Tibial artery (tissue), 4 donors: ENCODE measurements at regions of chr3 and their contacts with region 1.

Region 1: DNA sequence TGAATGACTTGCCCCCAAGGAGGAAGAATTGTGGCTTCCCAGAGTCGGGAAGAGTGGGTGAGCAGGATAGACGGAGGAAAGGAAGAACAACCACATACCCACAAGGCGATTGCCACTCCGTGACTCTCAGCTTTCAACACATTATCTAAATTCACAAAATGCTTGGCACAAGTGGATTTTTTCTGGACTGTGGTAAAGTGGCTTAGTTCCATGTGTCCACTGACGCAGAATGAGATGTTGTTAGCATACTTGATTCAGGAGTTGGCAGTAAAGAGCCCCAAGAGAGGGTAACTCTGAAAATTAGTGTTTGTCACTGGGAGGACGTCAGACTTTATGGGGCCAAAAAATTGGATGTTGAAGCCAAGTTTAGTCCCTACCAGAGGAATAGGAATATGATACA is 198.8 kb upstream of the CTNNB1 start:
- DNase-seq: peak; percentile 61 to 80
- H3K4me3 ChIP-seq: no peak overlapping the region
- H3K27ac ChIP-seq: peak overlapping the region; percentile 65 to 69
- H3K4me1 ChIP-seq: peaks cover 4 to 69% (median 42%) of the 10 kb centered on the region in 4 donors
- H3K27me3 ChIP-seq: no peaks in the 10 kb centered on the region
- CTCF ChIP-seq: no peak

Region 2: GRCh38 chr3:40877631-40878463 is 122.6 kb before region 1 on chr3:
- intact Hi-C with region 1: loop called (anchors 5 kb)
- DNase-seq: peak; percentile 74 to 93
- H3K4me3 ChIP-seq: peak overlapping the region; percentile 20 to 40
- H3K27ac ChIP-seq: peak overlapping the region; percentile 65 to 68
- H3K4me1 ChIP-seq: peaks cover 0 to 64% (median 37%) of the 10 kb centered on the region in 4 donors
- H3K27me3 ChIP-seq: no peaks in the 10 kb centered on the region
- CTCF ChIP-seq: no peak

Region 3: DNA sequence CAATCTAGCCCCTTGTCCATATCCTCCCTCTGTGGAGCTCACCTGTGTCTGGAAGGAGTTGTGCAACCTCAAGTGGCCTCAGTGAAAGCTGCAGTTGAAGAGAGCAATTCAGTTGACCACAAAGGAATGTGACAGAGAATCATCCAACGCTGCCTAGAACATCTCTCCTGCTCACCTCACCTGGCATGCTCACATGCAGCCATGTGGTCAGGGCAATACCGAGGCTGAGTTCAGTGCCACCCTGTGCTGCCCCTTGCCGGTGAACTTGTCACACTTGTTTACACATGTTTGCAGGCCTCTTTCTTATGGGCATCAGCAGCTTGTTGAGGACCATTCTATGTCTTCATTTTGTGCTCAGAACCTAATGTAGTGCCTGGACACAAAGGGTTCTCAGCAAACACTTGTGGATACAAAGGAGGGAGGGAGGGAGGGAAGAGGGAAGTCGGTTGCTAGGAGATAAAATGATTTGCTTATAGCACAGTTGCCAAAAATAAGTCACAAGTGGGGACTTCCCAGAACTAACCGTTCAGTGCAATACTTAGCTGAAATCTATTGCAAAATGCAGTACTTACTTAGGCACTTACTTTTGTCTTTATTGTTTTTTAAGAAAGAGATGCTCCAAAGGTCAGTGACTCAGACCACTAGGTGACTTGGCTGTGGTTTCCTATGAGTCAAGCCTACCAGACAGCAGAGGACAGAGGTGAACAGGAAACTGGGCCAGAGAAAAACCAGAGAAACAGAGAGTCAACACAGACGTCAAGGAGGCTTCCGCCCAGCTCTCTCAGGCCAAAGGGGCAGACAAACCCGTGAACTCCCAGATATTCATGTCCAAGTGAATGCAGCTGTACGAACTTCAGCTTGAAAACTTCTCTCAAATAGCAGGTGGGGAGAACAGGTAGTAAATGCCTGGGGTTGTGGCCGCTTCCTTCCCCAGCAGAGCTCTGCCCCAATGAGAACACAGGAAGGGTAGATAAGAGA is 29.0 kb before region 1 on chr3:
- intact Hi-C with region 1: loop called (anchors 2 kb)
- DNase-seq: peak; percentile 89
- H3K4me3 ChIP-seq: no peak overlapping the region
- H3K27ac ChIP-seq: peak overlapping the region; percentile 62 to 64
- H3K4me1 ChIP-seq: peaks cover 0 to 62% (median 44%) of the 10 kb centered on the region in 4 donors
- H3K27me3 ChIP-seq: no peaks in the 10 kb centered on the region
- CTCF ChIP-seq: no peak

Region 4: GRCh38 chr3:41026394-41027177 is 26.1 kb after region 1 on chr3:
- intact Hi-C with region 1: no loop called
- DNase-seq: peak in 1 of 2 donors; percentile 49
- H3K4me3 ChIP-seq: no peak overlapping the region
- H3K27ac ChIP-seq: no peak overlapping the region
- H3K4me1 ChIP-seq: peaks cover 0 to 5% (median 0%) of the 10 kb centered on the region in 4 donors
- H3K27me3 ChIP-seq: no peaks in the 10 kb centered on the region
- CTCF ChIP-seq: no peak

Region 5: GRCh38 chr3:41088882-41089281 is 88.4 kb after region 1 on chr3:
- intact Hi-C with region 1: no loop called
- DNase-seq: no peak
- H3K4me3 ChIP-seq: no peak overlapping the region
- H3K27ac ChIP-seq: no peak overlapping the region
- H3K4me1 ChIP-seq: peaks cover 0 to 9% (median 4%) of the 10 kb centered on the region in 4 donors
- H3K27me3 ChIP-seq: no peaks in the 10 kb centered on the region
- CTCF ChIP-seq: no peak

Region 6: DNA sequence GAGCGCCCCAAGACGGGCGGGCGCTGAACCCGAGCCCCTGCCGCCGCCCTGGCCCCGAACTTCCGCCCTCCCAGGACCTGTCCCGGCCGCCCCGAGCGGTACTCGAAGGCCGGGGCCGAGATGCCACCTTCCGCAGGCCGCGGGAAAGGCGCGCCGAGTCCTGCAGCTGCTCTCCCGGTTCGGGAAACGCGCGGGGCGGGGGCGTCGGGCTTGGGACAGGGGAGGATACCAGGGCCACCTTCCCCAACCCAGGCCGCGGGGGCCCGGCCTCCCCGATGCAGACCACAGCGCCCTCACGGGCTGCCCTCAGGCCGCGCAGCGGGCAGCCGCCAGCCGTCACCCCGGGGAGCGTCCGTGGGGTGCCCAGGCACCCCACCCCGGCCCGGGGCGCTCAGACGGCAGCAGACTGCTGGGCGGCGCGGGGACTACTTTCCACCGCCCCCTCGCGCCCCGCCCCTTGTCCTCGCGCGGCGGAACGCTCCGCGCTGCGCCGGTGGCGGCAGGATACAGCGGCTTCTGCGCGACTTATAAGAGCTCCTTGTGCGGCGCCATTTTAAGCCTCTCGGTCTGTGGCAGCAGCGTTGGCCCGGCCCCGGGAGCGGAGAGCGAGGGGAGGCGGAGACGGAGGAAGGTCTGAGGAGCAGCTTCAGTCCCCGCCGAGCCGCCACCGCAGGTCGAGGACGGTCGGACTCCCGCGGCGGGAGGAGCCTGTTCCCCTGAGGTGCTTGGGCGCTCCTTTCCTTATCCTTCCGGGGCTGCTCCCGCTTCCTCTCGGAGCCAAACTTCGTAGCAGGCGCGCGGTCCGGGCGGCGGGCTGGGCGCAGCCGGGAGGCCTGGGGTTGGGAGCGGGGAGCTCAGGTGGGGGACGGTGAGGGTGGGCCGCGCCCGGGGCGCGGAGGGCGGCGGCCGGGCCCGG is 198.7 kb after region 1 on chr3 and contains the start of gene CTNNB1:
- intact Hi-C with region 1: loop called (anchors 5 kb)
- DNase-seq: peak; percentile 90 to 96
- H3K4me3 ChIP-seq: peak within 1 kb of the TSS; percentile 80 to 92
- H3K27ac ChIP-seq: peak within 1 kb of the TSS; percentile 96 to 99
- H3K4me1 ChIP-seq: peaks cover 0 to 31% (median 14%) of the 10 kb centered on the region in 4 donors
- H3K27me3 ChIP-seq: no peaks in the 10 kb centered on the region
- CTCF ChIP-seq: peak in 1 of 2 experiments; percentile 19

Region 7: DNA sequence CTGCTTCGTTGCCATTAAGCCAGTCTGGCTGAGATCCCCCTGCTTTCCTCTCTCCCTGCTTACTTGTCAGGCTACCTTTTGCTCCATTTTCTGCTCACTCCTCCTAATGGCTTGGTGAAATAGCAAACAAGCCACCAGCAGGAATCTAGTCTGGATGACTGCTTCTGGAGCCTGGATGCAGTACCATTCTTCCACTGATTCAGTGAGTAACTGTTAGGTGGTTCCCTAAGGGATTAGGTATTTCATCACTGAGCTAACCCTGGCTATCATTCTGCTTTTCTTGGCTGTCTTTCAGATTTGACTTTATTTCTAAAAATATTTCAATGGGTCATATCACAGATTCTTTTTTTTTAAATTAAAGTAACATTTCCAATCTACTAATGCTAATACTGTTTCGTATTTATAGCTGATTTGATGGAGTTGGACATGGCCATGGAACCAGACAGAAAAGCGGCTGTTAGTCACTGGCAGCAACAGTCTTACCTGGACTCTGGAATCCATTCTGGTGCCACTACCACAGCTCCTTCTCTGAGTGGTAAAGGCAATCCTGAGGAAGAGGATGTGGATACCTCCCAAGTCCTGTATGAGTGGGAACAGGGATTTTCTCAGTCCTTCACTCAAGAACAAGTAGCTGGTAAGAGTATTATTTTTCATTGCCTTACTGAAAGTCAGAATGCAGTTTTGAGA is 223.8 kb after region 1 on chr3:
- intact Hi-C with region 1: loop called (anchors 10 kb)
- DNase-seq: peak in 1 of 2 donors; percentile 68
- H3K4me3 ChIP-seq: no peak overlapping the region
- H3K27ac ChIP-seq: peak overlapping the region; percentile 49 to 58
- H3K4me1 ChIP-seq: peaks cover 0 to 69% (median 44%) of the 10 kb centered on the region in 4 donors
- H3K27me3 ChIP-seq: no peaks in the 10 kb centered on the region
- CTCF ChIP-seq: peak; percentile 32 to 53